ENCODE measurements at regions of chr14 and their contacts with region 1.

Region 1: DNA sequence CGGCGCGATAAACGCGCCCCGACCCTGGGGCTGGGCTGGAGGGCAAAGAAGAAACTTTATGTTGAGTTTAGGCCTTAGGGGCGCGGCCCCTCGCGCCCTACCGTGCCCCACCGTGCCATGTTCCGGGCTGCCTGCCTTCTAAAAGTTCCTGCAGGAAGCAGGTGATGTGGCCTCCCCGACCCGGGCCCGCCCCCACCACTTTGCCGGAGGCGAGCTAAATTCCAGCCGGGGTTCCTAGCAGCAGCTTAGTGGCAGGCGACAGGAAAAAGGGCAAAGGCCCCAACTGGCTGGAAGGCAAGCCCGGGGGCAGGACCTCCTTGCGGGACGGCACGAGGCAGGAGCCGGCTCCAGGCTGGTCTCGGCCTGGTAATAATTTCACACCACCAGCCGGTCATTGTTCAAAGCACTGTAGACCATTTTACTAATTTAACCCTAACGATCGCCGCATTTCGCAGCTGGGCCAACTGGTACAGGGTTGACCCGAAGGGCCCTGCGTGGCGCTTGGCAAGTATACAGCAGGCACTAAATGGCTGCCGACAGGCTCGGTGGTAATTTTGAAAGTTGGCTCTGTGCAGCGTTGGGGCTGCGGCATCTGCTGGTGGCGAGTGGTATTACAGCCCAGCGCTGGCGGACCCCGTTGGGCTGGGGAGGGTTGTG is 895 bp upstream of the CCDC88C start:
- DNase-seq: peak; percentile 76
- H3K4me3 Mint-ChIP-seq: peak overlapping the region; percentile 93
- H3K27ac Mint-ChIP-seq: peak overlapping the region; percentile 68
- H3K4me1 Mint-ChIP-seq: peaks cover 24% of the 10 kb centered on the region
- H3K27me3 Mint-ChIP-seq: no peaks in the 10 kb centered on the region
- CTCF ChIP-seq: peak; percentile 88

Region 2: GRCh38 chr14:91164685-91165084 is 253.8 kb before region 1 on chr14:
- CTCF ChIA-PET with region 1: no interaction called
- intact Hi-C with region 1: no loop called
- DNase-seq: no peak
- H3K4me3 Mint-ChIP-seq: no peak overlapping the region
- H3K27ac Mint-ChIP-seq: no peak overlapping the region
- H3K4me1 Mint-ChIP-seq: no peaks in the 10 kb centered on the region
- H3K27me3 Mint-ChIP-seq: no peaks in the 10 kb centered on the region
- CTCF ChIP-seq: no peak

Region 3: DNA sequence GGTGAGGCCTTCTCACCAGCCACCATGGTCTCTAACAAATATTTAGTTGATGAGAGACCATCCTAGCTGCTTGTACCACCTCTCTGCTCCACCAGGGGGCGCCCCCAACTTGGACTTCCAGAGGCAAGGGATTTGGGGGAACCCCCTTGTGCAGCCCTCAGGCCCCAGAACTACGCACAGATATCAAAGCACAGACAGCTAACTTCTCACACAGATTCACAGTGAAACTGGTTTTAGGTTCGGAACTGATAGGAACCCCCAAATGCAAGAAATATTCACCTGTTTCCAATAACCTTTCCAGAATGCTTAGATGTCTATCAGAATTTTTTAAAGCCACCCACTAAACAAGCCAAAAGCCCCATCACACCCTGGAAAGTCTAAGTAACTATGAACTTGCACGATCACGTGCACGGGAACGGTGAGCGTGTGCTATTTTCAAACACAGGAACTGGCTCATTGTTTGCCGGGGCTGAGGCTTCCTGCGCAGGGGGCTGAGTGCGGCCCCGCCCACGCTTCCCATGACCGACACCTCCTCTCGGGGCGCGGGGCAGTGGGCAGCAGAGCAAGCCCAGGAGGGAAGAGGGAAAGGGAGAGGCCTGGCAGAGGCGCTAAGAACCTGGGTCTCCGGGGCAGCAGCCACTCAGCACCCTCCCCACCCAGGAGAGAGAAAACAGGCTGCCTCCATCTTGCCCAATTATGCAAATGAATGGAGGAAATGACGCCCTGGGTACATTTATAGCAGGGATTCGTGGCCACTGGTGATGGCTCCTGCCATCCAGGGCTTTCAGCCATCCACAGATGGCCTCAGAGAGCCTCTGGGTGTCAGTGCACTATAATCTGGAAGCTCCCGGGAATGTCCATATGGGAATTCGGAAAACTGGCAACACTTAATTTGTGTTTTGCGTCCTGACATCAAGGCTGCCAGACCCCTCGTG is 94.6 kb before region 1 on chr14:
- CTCF ChIA-PET with region 1: interaction called, 42 read pairs
- intact Hi-C with region 1: loop called (anchors 1 kb)
- DNase-seq: peak; percentile 88
- H3K4me3 Mint-ChIP-seq: no peak overlapping the region
- H3K27ac Mint-ChIP-seq: no peak overlapping the region
- H3K4me1 Mint-ChIP-seq: peaks cover under 1% of the 10 kb centered on the region
- H3K27me3 Mint-ChIP-seq: no peaks in the 10 kb centered on the region
- CTCF ChIP-seq: peak; percentile 93

Region 4: DNA sequence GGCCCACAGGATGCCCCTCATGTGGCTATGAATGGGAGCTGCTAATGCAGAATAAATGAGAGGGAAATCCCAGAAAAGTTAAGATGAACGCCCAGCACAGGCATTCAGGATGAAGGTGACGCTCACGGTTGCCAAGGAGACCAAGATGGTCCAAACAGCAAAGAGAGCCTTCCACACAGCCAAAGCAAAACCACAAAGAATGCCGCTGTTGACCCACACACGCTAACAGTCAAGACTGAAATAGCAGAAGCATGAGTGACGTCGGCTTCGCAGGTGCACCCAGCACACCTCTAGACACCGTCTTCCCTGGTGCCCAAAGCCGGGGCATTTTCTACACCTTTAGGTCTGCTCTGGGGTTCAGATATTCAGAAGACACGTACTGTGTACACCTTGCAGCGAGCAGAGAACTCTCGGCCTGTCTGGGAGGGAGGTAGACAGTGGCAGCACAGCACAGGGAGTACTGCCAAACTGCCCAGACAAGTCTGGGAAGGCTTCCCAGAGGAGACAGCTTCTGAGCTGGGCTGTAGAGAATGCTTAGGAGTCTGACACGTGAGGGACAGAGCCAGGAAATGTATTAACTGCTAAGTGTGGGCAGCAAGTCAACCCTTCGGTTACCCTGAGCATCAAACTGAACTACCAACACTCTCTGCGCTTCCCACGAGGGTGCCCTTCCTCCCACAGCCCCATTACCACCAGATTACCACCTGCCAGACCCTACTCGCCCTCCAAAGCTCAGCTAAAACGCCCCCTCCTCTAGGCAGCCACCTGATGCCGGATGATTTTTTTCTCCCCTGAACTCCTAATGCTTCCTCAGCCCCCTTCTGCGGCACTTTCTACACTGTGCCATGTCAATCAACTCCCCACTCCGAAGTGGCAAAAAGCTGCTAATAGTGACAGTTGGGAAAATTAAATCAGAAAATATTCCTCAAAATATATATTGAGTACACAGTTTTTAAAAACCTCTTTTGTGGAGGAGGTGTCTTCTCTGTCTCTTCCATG is 51.0 kb before region 1 on chr14:
- CTCF ChIA-PET with region 1: no interaction called
- intact Hi-C with region 1: loop called (anchors 5 kb)
- DNase-seq: peak; percentile 88
- H3K4me3 Mint-ChIP-seq: peak overlapping the region; percentile 67
- H3K27ac Mint-ChIP-seq: peak overlapping the region; percentile 85
- H3K4me1 Mint-ChIP-seq: peaks cover 20% of the 10 kb centered on the region
- H3K27me3 Mint-ChIP-seq: no peaks in the 10 kb centered on the region
- CTCF ChIP-seq: no peak

Region 5: DNA sequence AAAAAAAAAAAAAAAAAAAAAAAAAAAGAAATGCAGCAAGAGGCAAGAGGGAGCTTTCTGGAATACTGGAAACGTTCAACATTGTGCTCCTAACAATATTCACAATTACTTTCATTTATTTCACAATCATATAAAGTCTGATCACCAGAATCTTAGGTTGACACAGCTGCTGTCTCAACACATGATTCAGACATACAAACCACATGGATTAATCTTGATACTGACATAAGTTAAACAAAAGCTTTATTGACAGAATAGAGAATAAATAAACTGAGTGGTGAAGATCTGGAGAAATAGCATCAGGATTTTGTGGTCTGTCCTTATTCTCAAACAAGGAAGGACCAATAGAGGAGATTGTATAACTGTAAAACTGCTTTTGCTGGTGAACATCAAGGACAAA is 234.2 kb after region 1 on chr14:
- CTCF ChIA-PET with region 1: no interaction called
- intact Hi-C with region 1: no loop called
- DNase-seq: no peak
- H3K4me3 Mint-ChIP-seq: no peak overlapping the region
- H3K27ac Mint-ChIP-seq: no peak overlapping the region
- H3K4me1 Mint-ChIP-seq: peaks cover 14% of the 10 kb centered on the region
- H3K27me3 Mint-ChIP-seq: no peaks in the 10 kb centered on the region
- CTCF ChIP-seq: no peak